ENCODE measurements at regions of chr2 and their contacts with region 1.

Region 1: GRCh38 chr2:206392118-206392517 is 51.2 kb upstream of the ADAM23 start:
- DNase-seq: no peak
- ATAC-seq: peak; percentile 99
- H3K4me3 ChIP-seq: no peak overlapping the region
- H3K27ac ChIP-seq: no peak overlapping the region
- H3K4me1 ChIP-seq: no peaks in the 10 kb centered on the region
- H3K27me3 ChIP-seq: no peaks in the 10 kb centered on the region
- CTCF ChIP-seq: peak; percentile 57 to 75 (median 71)
- EP300 ChIP-seq: no peak
- POLR2A ChIP-seq: no peak
- RAD21 ChIP-seq: peak; percentile 96

Region 2: DNA sequence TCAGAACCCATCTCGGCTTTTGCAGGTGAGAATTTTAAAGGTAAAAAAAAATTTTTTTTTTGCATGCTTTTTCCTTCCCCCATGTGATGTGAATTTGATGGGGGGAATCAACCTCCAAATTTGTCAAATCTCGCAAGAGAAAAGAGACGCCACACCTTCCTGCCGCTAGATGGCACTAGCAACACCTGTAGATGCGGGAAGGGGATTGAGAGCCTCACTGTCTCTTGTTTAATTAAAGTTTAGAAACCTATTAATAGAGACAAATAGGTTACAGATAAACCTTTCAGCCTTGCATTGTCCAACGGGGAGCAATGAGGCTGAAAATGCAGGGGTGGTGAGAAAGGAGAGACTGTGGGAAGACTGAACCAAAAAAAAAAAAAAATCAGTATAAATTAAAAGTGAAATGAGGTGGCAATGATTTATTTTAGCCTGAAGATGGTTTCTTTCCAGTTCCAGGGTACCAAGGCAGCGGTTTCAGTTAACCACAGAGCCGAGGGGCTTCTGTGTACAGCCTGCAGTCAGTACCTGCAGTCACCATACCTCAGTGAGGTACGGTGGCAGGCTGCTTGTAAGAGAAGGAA is 625.2 kb before region 1 on chr2:
- CTCF ChIA-PET with region 1: no interaction called
- POLR2A ChIA-PET with region 1: no interaction called
- RAD21 ChIA-PET with region 1: no interaction called
- SMC1A ChIA-PET with region 1: no interaction called
- in situ Hi-C with region 1: no loop called
- intact Hi-C with region 1: no loop called
- DNase-seq: no peak
- ATAC-seq: peak; percentile 60
- H3K4me3 ChIP-seq: no peak overlapping the region
- H3K27ac ChIP-seq: no peak overlapping the region
- H3K4me1 ChIP-seq: no peaks in the 10 kb centered on the region
- H3K27me3 ChIP-seq: peaks cover 0 to 2% of the 10 kb centered on the region in 2 experiments; a peak in 1 of 4 replicates
- CTCF ChIP-seq: peak; percentile 77 to 89 (median 79)
- EP300 ChIP-seq: no peak
- POLR2A ChIP-seq: no peak
- RAD21 ChIP-seq: peak; percentile 67

Region 3: GRCh38 chr2:206271066-206271465 is 121.1 kb before region 1 on chr2:
- CTCF ChIA-PET with region 1: no interaction called
- POLR2A ChIA-PET with region 1: no interaction called
- RAD21 ChIA-PET with region 1: no interaction called
- SMC1A ChIA-PET with region 1: no interaction called
- in situ Hi-C with region 1: no loop called
- intact Hi-C with region 1: no loop called
- DNase-seq: no peak
- ATAC-seq: no peak
- H3K4me3 ChIP-seq: no peak overlapping the region
- H3K27ac ChIP-seq: no peak overlapping the region
- H3K4me1 ChIP-seq: no peaks in the 10 kb centered on the region
- H3K27me3 ChIP-seq: peaks cover 0 to 7% of the 10 kb centered on the region in 2 experiments
- CTCF ChIP-seq: no peak
- EP300 ChIP-seq: no peak
- POLR2A ChIP-seq: no peak
- RAD21 ChIP-seq: no peak

Region 4: GRCh38 chr2:206423149-206423548 is 31.0 kb after region 1 on chr2:
- CTCF ChIA-PET with region 1: no interaction called
- POLR2A ChIA-PET with region 1: no interaction called
- RAD21 ChIA-PET with region 1: no interaction called
- SMC1A ChIA-PET with region 1: no interaction called
- in situ Hi-C with region 1: no loop called
- intact Hi-C with region 1: no loop called
- DNase-seq: no peak
- ATAC-seq: peak; percentile 93
- H3K4me3 ChIP-seq: no peak overlapping the region
- H3K27ac ChIP-seq: no peak overlapping the region
- H3K4me1 ChIP-seq: no peaks in the 10 kb centered on the region
- H3K27me3 ChIP-seq: no peaks in the 10 kb centered on the region
- CTCF ChIP-seq: no peak
- EP300 ChIP-seq: no peak
- POLR2A ChIP-seq: no peak
- RAD21 ChIP-seq: no peak

Region 5: GRCh38 chr2:206442833-206443734 is 51.0 kb after region 1 on chr2 and contains the start of gene ADAM23:
- CTCF ChIA-PET with region 1: no interaction called
- POLR2A ChIA-PET with region 1: no interaction called
- RAD21 ChIA-PET with region 1: no interaction called
- SMC1A ChIA-PET with region 1: no interaction called
- in situ Hi-C with region 1: no loop called
- intact Hi-C with region 1: loop called (anchors 2 kb)
- DNase-seq: no peak
- ATAC-seq: peak; percentile 51
- H3K4me3 ChIP-seq: peak within 1 kb of the TSS; percentile 63
- H3K27ac ChIP-seq: no peak within 1 kb of the TSS
- H3K4me1 ChIP-seq: peaks cover 7% of the 10 kb centered on the region
- H3K27me3 ChIP-seq: peaks cover 3 to 24% of the 10 kb centered on the region in 2 experiments
- CTCF ChIP-seq: peak in 1 of 3 experiments; percentile 15; a peak in 2 of 6 replicates
- EP300 ChIP-seq: no peak
- POLR2A ChIP-seq: peak; percentile 55; the same call in 1 of the 2 replicates
- RAD21 ChIP-seq: peak; percentile 38; the same call in 1 of the 2 replicates
- polyA plus RNA-seq, gene ADAM23: 7.9 to 11.9 TPM

Region 6: DNA sequence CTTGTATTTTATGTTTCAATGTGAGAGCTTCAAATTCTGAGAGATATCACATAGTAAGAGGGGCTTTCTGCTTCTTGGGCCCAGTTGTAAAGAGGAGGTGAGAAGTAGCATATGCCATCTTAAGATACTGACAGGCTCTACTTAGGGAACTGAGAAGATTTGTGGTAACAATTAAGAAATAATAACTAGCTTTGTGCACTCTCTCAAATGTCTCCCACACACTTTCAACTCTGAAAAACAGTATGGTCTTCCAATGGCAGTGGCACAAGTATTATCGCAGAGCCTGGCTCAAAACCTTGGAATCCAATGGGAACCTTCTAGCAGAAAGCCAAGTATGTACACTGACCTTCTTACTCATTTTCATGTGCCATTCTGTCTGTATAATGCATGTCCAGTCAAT is 169.8 kb after region 1 on chr2:
- CTCF ChIA-PET with region 1: interaction called, 53 read pairs
- POLR2A ChIA-PET with region 1: no interaction called
- RAD21 ChIA-PET with region 1: interaction called, 15 read pairs
- SMC1A ChIA-PET with region 1: interaction called, 37 read pairs
- in situ Hi-C with region 1: no loop called
- intact Hi-C with region 1: loop called (anchors 1 kb)
- DNase-seq: no peak
- ATAC-seq: peak; percentile 91
- H3K4me3 ChIP-seq: no peak overlapping the region
- H3K27ac ChIP-seq: no peak overlapping the region
- H3K4me1 ChIP-seq: no peaks in the 10 kb centered on the region
- H3K27me3 ChIP-seq: no peaks in the 10 kb centered on the region
- CTCF ChIP-seq: no peak
- EP300 ChIP-seq: peak in 1 of 2 experiments; percentile 78; a peak in 3 of 4 replicates
- POLR2A ChIP-seq: no peak
- RAD21 ChIP-seq: no peak

Region 7: DNA sequence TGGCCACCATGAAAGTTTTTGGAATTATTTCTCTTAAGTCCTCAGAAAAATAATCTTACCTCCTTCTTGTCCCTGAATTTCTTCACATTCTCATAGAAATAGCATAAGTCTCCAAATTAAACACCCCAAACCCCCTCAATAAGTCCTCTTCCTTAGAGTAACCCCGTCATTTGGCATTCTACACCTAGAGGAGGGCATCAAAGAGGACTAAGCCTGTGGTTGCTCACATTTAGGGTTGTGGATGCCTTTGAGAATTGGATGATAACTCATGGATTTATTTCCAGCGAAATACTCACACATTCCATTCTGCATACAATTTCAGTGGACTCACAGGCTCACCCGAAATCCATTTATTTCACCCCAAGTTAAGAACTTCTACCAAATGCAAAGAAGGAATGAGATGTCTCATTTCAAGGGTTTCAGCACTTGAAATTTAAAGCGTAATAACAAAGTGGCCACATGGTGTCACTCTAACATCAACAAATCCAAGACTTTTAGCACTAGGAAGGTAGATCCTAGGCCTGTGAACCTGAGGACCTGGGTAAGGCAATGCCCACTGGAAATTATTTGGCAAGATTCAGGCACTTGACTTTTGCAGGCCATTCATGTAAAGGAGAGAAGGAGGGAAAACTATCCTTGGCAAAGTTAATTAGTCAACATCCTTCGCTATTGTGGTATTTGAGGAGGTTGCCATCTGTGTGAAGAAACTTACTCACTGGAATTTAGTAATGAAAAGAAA is 301.4 kb after region 1 on chr2:
- CTCF ChIA-PET with region 1: interaction called, 3 read pairs
- POLR2A ChIA-PET with region 1: no interaction called
- RAD21 ChIA-PET with region 1: no interaction called
- SMC1A ChIA-PET with region 1: no interaction called
- in situ Hi-C with region 1: no loop called
- intact Hi-C with region 1: loop called (anchors 5 kb)
- DNase-seq: peak; percentile 24
- ATAC-seq: peak; percentile 84
- H3K4me3 ChIP-seq: no peak overlapping the region
- H3K27ac ChIP-seq: no peak overlapping the region
- H3K4me1 ChIP-seq: no peaks in the 10 kb centered on the region
- H3K27me3 ChIP-seq: no peaks in the 10 kb centered on the region
- CTCF ChIP-seq: peak; percentile 41 to 77 (median 61); a peak in 5 of 6 replicates
- EP300 ChIP-seq: no peak
- POLR2A ChIP-seq: no peak
- RAD21 ChIP-seq: peak; percentile 94

Region 8: GRCh38 chr2:206783718-206784117 is 391.6 kb after region 1 on chr2:
- CTCF ChIA-PET with region 1: interaction called, 7 read pairs
- POLR2A ChIA-PET with region 1: no interaction called
- RAD21 ChIA-PET with region 1: interaction called, 3 read pairs
- SMC1A ChIA-PET with region 1: interaction called, 5 read pairs
- in situ Hi-C with region 1: no loop called
- intact Hi-C with region 1: loop called (anchors 1 kb)
- DNase-seq: no peak
- ATAC-seq: peak; percentile 74
- H3K4me3 ChIP-seq: no peak overlapping the region
- H3K27ac ChIP-seq: no peak overlapping the region
- H3K4me1 ChIP-seq: no peaks in the 10 kb centered on the region
- H3K27me3 ChIP-seq: no peaks in the 10 kb centered on the region
- CTCF ChIP-seq: peak; percentile 12 to 47 (median 37); a peak in 3 of 6 replicates
- EP300 ChIP-seq: no peak
- POLR2A ChIP-seq: no peak
- RAD21 ChIP-seq: no peak